ENCODE measurements at regions of chr9 and their contacts with region 1.

Region 1: DNA sequence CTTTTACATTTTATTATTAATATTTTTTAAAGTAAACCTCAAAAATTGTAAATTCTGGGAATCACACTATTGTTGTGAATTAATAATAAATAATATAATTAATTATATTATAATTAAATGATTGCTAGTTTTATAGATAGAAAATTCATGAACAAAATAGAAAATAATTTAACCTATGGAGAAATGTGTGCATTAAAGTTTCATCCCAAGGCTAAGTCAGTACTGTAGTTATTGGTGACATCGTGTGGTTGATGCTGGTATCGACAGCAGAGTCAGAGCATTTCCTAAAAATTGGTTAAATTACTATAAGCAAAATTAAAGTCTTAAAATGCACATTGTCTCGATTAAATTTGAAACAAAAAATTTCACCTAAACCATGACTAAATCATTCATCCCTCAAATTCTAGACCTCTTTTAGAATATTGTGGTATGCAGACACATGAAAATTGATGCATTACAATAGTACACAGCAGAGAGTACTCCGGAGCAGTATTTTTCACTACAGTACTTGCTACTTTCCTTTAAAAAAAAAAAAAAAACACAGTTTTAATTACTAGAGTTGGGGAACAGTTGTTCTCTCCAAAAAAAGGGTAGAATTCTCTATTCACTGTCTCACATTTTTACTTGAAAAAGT is 73.9 kb downstream of the RORB start:
- DNase-seq: no peak
- ATAC-seq: no peak
- H3K4me3 ChIP-seq: no peak overlapping the region
- H3K27ac ChIP-seq: no peak overlapping the region
- H3K4me1 ChIP-seq: no peaks in the 10 kb centered on the region
- H3K27me3 ChIP-seq: no peaks in the 10 kb centered on the region

Region 2: GRCh38 chr9:74309654-74310053 is 261.3 kb before region 1 on chr9:
- intact Hi-C with region 1: loop called in 2 of 4 experiments (anchors 10 kb)
- DNase-seq: no peak
- ATAC-seq: no peak
- H3K4me3 ChIP-seq: no peak overlapping the region
- H3K27ac ChIP-seq: no peak overlapping the region
- H3K4me1 ChIP-seq: no peaks in the 10 kb centered on the region
- H3K27me3 ChIP-seq: no peaks in the 10 kb centered on the region

Measured in right cardiac atrium (tissue), 5 donors.